ENCODE measurements at regions of chr17 and their contacts with region 1.

Region 1: DNA sequence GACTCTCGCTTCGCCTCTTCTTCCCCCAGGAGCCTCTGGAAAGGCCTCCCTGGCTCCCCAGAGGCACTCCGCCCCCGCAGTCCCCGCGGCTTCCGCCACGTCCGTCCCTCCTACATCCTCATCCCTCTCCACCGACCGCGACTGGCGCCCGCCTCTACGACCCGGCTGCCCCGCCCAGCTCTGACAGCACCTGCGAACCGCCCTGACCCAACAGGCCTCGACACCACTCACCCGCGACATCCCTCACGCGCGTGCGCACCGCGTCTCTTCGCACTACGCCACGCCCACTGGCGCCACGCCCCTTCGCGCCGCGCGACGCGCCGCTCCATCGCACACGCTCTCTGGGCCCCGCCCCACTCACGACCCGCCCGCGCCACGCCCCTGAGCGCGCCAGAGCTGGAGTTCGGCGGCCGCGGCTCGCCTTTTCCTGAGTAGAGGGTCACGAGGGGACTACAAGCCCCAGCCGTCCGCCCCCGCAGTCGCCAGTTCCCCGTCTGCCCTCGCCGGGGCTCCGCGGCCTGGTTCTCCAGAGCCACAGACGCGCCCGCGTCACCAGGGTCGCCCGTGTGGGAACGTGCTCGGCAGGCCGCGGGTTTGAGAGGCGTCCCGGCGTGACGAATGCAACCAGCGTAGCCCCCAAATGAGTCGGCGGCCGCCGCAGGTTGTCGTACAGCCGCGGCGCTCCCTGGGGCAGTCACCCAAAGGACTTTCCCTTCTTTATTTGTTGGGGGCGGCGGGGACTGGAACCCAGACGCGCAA is 56.2 kb upstream of the LRRC37A3 start:
- DNase-seq: peak; percentile 95 to 97 (median 96)
- ATAC-seq: peak; percentile 94
- H3K4me3 ChIP-seq: peak overlapping the region; percentile 63
- H3K27ac ChIP-seq: peak overlapping the region; percentile 98
- H3K4me1 ChIP-seq: peaks cover 18 to 19% of the 10 kb centered on the region in 2 experiments
- H3K27me3 ChIP-seq: no peaks in the 10 kb centered on the region
- CTCF ChIP-seq: 0 out of 6 replicates have a peak, but pooled peaks of 1 of the 3 experiments have one; percentile 5
- EP300 ChIP-seq: peak; percentile 29; the same call in 1 of the 2 replicates
- POLR2A ChIP-seq: peak; percentile 91
- RAD21 ChIP-seq: peak; percentile 4 to 11; a peak in 1 of 4 replicates

Region 2: GRCh38 chr17:65055348-65056261 is 80.1 kb after region 1 on chr17:
- CTCF ChIA-PET with region 1: no interaction called
- POLR2A ChIA-PET with region 1: no interaction called
- in situ Hi-C with region 1: no loop called
- intact Hi-C with region 1: loop called (anchors 5 kb)
- DNase-seq: peak; percentile 48 to 67 (median 63)
- ATAC-seq: peak; percentile 63
- H3K4me3 ChIP-seq: peak overlapping the region; percentile 95
- H3K27ac ChIP-seq: peak overlapping the region; percentile 98
- H3K4me1 ChIP-seq: peaks cover 20 to 21% of the 10 kb centered on the region in 2 experiments; a peak in 4 of 5 replicates
- H3K27me3 ChIP-seq: no peaks in the 10 kb centered on the region
- CTCF ChIP-seq: no peak
- EP300 ChIP-seq: no peak
- POLR2A ChIP-seq: no peak
- RAD21 ChIP-seq: no peak

Measured in K562 (cell line).